A673 (cell line): ENCODE measurements at regions of chr5 and their contacts with region 1.

Region 1: GRCh38 chr5:143002459-143003328 is 232.5 kb downstream of the ARHGAP26 start:
- DNase-seq: peak; percentile 68
- H3K4me3 ChIP-seq: no peak overlapping the region
- H3K27ac ChIP-seq: peak overlapping the region; percentile 89
- H3K4me1 ChIP-seq: peaks cover 31% of the 10 kb centered on the region
- H3K27me3 ChIP-seq: no peaks in the 10 kb centered on the region
- CTCF ChIP-seq: peak; percentile 58

Region 2: DNA sequence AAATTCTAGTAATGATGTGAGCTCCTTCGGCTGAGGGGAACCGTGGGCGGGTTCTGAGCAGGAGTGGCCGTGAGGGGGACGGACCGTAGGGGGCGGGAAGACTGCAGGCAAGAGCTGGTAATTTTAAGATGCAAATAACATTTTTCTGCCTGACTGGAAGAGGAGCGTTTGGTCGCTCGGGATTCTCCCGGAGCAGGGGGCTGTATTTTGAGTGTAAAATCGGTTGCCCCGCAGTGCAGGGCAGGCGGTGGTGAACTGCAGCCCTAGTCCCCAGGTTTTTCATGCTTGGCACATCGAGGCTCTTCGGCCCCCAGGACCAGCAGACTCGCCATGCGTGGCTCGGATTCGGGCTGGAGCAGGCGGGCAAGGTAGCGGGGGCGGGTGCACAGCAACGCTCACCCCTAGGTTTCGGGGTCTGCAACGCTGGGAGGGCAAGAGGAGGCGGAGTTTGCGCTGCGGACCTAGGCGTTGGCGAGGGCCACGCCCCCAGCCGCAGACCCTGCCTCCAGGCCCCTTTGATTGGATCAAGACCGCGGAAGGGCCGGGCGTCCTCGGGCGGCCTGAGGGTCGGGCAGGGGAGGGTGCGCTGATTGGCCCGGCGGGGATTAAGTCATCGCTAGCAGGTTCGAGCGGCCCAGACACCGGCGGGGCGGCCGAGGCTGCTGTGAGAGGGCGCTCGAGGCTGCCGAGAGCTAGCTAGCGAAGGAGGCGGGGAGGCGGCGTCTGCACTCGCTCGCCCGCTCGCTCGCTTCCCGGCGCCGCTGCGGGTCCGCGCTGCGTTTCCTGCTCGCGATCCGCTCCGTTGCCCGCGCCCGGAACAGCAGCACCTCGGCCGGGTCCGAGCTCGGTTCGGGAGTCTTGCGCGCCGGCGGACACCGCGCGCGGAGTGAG is 232.7 kb before region 1 on chr5 and contains the start of gene ARHGAP26:
- CTCF ChIA-PET with region 1: no interaction called
- POLR2A ChIA-PET with region 1: no interaction called
- intact Hi-C with region 1: no loop called
- DNase-seq: peak; percentile 98
- H3K4me3 ChIP-seq: peak within 1 kb of the TSS; percentile 66
- H3K27ac ChIP-seq: peak within 1 kb of the TSS; percentile 58
- H3K4me1 ChIP-seq: peaks cover 15% of the 10 kb centered on the region
- H3K27me3 ChIP-seq: no peaks in the 10 kb centered on the region
- CTCF ChIP-seq: no peak; the same call in 1 of the 2 replicates
- total RNA-seq, gene ARHGAP26: 25.5 and 25.8 TPM in 2 replicates

Region 3: GRCh38 chr5:142845402-142845921 is 157.2 kb before region 1 on chr5:
- CTCF ChIA-PET with region 1: no interaction called
- POLR2A ChIA-PET with region 1: no interaction called
- intact Hi-C with region 1: no loop called
- DNase-seq: no peak
- H3K4me3 ChIP-seq: no peak overlapping the region
- H3K27ac ChIP-seq: no peak overlapping the region
- H3K4me1 ChIP-seq: peaks cover 21% of the 10 kb centered on the region
- H3K27me3 ChIP-seq: no peaks in the 10 kb centered on the region
- CTCF ChIP-seq: no peak

Region 4: GRCh38 chr5:142946547-142947426 is 55.9 kb before region 1 on chr5:
- CTCF ChIA-PET with region 1: interaction called, 12 read pairs
- POLR2A ChIA-PET with region 1: no interaction called
- intact Hi-C with region 1: no loop called
- DNase-seq: no peak
- H3K4me3 ChIP-seq: no peak overlapping the region
- H3K27ac ChIP-seq: no peak overlapping the region
- H3K4me1 ChIP-seq: no peaks in the 10 kb centered on the region
- H3K27me3 ChIP-seq: no peaks in the 10 kb centered on the region
- CTCF ChIP-seq: no peak

Region 5: GRCh38 chr5:143134900-143135299 is 132.2 kb after region 1 on chr5:
- CTCF ChIA-PET with region 1: no interaction called
- POLR2A ChIA-PET with region 1: no interaction called
- intact Hi-C with region 1: no loop called
- DNase-seq: no peak
- H3K4me3 ChIP-seq: no peak overlapping the region
- H3K27ac ChIP-seq: no peak overlapping the region
- H3K4me1 ChIP-seq: peaks cover 35% of the 10 kb centered on the region
- H3K27me3 ChIP-seq: no peaks in the 10 kb centered on the region
- CTCF ChIP-seq: no peak

Region 6: DNA sequence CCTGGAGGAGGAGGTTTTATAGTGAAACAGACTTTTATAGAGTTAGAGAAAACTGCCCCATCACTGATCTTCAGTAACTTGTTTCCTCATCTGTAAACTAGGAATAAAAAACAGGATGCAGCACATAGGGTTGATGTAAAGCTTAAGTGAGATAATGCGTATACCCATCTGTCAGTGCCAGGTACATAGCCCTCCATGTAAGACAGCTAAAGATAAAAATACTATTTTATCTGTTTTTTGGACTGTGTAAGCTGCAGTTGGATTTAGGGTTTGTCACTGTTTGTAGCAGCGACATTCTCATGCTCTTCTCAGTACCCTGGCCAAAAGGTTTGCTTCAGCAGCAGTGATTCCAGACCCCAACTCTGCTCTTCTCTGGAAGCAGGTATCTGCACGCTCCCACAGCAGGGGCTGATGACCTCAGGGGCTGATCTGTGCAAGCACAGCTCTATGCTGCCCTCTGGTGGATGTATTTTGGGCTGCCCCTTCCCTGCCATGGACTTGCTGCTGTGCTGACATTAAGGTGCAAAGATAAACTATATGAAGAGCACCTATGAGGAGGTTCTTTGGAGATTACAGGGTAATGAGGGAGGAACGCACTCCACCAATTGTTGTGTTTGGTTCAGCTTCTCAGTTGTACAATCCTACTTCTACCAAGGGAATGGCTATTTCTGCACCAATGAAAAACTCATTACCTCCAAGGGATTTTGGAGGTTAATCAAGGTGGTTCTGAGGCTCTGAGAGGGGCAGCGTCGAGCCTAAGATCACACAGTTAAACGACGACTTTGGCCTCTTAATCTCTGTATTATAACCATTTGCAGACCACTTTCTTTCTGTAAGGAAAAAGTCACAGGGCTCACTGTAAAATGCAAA is 822.4 kb after region 1 on chr5:
- CTCF ChIA-PET with region 1: no interaction called
- POLR2A ChIA-PET with region 1: no interaction called
- intact Hi-C with region 1: loop called (anchors 5 kb)
- DNase-seq: peak; percentile 76
- H3K4me3 ChIP-seq: no peak overlapping the region
- H3K27ac ChIP-seq: no peak overlapping the region
- H3K4me1 ChIP-seq: no peaks in the 10 kb centered on the region
- H3K27me3 ChIP-seq: no peaks in the 10 kb centered on the region
- CTCF ChIP-seq: peak; percentile 95